ENCODE measurements at regions of chr12 and their contacts with region 1.

Region 1: DNA sequence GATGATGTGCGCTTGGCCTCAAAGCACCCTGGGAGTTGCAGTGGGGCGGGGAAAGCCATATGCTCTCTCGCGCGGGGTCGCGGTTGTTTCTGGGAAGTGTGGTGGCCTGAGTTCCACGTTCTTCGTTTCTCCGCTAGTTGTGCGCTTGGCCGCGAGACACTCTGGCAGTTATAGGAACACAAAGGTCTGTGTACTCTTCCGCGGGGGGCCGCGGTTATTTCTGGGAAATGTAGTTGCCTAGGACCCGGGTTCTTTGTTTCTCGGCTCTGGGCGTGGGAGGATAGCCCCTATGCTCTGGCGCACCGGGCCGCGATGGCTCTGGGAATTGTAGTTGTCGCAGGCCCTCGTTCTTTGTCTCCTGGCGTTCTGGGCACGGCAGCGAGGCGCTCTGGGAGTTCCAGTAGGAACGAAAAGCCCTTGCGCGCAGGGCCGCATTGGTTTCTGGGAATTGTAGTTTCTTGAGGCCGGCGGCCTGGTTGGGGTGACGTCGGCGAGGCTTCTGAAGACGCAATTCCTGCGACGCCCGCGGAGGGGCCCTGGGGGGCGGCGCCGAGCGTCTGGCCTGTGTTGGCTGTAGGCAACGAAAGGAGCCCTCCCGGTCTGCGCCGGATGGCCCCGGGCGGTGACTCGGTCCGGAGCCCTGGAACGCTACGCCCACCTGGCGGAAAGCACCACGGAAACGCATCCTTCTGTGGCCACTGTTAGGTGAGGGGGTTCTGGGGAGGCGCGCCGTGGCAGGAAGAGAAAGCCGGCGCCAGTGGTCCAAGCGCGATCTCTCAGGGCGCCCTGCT is at the start of gene ZNF140:
- DNase-seq: peak; percentile 96
- H3K4me3 ChIP-seq: peak within 1 kb of the TSS; percentile 68 to 86
- H3K27ac ChIP-seq: peak within 1 kb of the TSS; percentile 97 to 98
- H3K4me1 ChIP-seq: no peaks in the 10 kb centered on the region
- H3K27me3 ChIP-seq: no peaks in the 10 kb centered on the region
- CTCF ChIP-seq: peak in 3 of 4 experiments; percentile 4 to 66 (median 53)
- POLR2A ChIP-seq: peak; percentile 54
- total RNA-seq, gene ZNF140: 18.2 to 23.7 TPM

Region 2: DNA sequence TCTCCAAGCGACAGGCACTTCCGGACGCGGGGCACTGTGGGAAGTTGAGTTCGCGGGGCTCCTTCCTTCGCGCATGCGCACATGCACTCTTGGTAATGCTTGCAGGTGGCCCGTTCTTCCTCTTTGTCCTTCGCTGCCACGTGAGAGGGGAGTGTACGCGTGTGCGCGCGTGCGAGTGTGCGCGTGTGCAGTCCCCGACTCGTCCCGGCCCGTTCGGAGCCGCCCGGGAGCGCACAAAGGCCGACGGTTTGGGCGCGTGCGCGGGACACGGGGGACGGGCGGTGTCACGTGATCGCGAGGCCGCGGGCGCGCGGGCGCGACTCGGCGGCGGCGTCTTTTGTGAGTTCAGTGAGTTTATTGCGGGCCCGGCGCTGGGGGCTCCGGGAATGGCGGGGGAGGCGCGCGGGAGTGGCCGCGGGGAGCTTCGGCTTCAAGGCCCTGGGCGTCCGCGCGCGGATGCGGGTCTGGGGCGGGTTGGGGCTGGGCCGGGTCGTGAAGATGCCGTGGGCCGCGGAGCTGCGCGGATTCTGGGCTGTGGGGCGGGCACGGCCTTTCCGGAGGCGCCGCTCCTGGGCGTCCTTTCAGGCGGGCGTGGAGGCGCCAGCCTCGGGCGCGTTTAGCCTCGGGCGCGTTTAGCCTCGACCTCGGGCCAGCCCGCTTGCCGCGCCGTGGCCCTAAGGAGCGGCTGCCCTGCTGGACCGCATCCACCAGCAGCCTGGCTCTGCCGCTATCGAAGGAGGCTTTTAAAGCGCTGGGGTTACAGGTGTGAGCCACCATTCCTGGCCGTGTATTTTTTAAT is 43.2 kb before region 1 on chr12 and contains the start of gene ZNF84:
- intact Hi-C with region 1: loop called (anchors 2 kb)
- DNase-seq: peak; percentile 96
- H3K4me3 ChIP-seq: peak within 1 kb of the TSS; percentile 78 to 92
- H3K27ac ChIP-seq: peak within 1 kb of the TSS; percentile 94 to 96
- H3K4me1 ChIP-seq: no peaks in the 10 kb centered on the region
- H3K27me3 ChIP-seq: no peaks in the 10 kb centered on the region
- CTCF ChIP-seq: peak in 1 of 4 experiments; percentile 17
- POLR2A ChIP-seq: peak; percentile 71
- total RNA-seq, gene ZNF84: 22.2 to 52.0 TPM